ENCODE measurements at regions of chr10 and their contacts with region 1.

Region 1: DNA sequence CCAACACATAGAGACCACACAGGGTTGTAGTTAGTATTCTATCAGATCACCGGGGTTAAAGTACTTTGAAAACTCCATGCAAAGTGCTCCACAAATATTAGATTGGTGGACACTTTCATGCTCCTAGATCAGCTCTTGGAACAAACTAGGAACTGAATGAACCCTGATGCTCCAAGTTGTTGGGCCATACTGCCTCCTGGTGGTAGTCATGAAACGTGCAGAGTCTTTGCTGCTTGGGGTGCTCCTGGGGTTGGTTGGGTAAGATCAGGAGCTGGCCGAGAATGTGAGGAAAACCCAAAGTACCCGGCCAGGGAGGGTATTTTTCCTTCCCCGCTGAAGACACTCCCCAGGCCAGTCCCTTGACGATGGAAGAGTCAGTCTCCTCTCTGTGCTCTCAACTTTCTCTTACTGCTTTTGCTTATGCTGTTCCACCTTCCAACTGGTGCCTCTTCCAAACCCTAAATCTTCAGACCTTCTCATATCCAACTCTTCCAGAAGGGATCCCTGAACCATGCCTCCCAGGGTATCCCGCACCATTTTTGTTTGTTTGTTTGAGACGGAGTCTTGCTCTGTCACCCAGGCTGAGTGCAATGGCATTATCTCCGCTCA is 920 bp upstream of the RPEL1 start:
- DNase-seq: peak; percentile 75
- ATAC-seq: peak; percentile 88
- H3K4me3 Mint-ChIP-seq: no peak overlapping the region
- H3K27ac Mint-ChIP-seq: no peak overlapping the region
- H3K4me1 Mint-ChIP-seq: peaks cover 8% of the 10 kb centered on the region
- H3K27me3 Mint-ChIP-seq: no peaks in the 10 kb centered on the region
- CTCF ChIP-seq: peak; percentile 84

Region 2: GRCh38 chr10:102841827-102842345 is 402.9 kb before region 1 on chr10:
- CTCF ChIA-PET with region 1: interaction called, 7 read pairs
- POLR2A ChIA-PET with region 1: no interaction called
- intact Hi-C with region 1: loop called (anchors 10 kb)
- DNase-seq: no peak
- ATAC-seq: no peak
- H3K4me3 Mint-ChIP-seq: no peak overlapping the region
- H3K27ac Mint-ChIP-seq: no peak overlapping the region
- H3K4me1 Mint-ChIP-seq: no peaks in the 10 kb centered on the region
- H3K27me3 Mint-ChIP-seq: no peaks in the 10 kb centered on the region
- CTCF ChIP-seq: no peak

Region 3: DNA sequence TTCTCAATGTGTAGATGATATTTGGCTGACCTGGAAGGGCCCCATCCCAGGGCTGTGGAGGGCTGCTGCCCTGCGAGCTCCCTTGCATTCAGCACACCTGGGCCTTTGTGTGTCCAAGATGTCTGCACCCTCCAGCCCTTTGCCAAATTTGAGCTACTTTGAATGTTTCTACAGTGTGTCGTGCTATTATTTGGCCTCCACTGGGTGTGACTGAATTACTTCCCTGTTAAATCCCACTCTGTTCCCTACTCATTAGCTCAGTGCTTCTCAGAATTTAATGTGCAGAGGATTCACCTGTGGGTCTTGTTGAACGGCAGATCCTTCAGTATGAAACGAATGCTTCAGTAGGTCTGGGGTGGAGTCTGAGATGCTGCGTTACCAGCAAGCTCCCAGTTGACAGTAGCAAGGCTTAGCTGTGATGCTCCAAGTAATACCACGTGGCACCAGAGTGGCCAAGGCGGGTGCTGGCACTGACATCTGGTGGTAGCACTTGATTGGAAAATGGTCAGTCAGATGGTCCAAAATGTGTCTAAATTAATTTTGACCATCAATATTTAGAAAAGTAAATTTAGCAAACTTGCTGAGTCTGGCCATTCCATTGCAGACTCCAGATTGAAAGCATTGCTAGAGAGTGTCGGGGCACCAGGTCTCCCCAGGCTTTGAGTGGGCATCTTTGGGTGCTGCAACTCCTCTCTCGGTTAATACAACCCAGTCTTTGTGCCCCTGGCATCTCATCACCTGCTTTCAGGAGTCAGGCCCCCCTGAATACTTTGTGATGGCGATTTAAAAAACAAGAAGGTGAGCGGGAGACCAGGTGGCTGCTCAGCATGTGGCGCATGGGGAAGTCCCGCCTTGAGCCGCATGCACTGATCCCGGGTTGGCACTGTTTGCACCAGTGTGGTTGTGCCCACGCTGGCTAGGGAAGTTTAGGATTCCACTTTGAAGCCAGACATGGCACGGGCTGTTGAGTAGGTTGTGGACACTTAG is 181.9 kb before region 1 on chr10:
- CTCF ChIA-PET with region 1: interaction called, 10 read pairs
- POLR2A ChIA-PET with region 1: no interaction called
- intact Hi-C with region 1: no loop called
- DNase-seq: no peak
- ATAC-seq: no peak
- H3K4me3 Mint-ChIP-seq: no peak overlapping the region
- H3K27ac Mint-ChIP-seq: no peak overlapping the region
- H3K4me1 Mint-ChIP-seq: no peaks in the 10 kb centered on the region
- H3K27me3 Mint-ChIP-seq: no peaks in the 10 kb centered on the region
- CTCF ChIP-seq: no peak

Region 4: DNA sequence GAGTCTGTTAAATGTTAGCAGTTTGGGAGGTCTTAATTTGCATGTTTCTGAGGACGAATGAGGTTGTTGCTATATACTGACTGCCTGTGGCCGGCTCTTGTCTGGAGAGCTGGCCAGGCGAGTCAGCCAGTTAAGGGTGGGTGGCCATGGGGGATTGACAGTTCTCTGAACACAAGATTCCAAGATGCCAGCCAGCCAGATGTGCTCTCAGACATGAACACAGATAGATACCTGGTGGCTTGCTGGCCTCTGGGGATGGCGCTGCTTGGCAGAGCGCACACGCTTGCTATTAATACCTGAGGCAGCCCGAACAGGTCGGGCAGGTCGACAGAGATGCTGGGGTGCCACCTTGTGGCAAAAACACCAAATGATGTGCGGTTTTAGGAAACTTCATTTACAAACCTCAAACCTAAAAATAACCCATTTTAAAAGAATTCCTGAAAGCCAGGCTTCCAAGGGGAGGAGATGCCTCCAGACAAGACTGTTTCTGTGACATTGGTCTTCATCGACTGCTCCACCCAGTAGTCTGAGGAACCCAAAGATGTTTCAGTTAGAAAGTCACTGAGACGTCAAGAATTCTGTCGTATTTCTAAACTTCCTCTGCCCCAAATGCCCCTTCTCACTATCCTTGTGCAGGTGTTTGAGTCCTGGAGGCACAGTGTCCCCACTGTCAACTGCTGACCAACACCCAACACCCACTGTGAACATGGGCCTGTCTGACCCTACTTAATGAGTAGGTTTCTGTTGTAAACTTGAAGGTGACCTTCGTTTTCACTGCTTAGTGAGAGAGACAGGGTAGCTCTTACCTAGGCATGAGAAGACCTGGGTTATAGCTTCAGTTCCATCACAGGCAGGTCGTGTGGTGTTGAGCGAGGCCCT is 175.1 kb before region 1 on chr10:
- CTCF ChIA-PET with region 1: interaction called, 10 read pairs
- POLR2A ChIA-PET with region 1: no interaction called
- intact Hi-C with region 1: loop called (anchors 10 kb)
- DNase-seq: peak; percentile 84
- ATAC-seq: peak; percentile 76
- H3K4me3 Mint-ChIP-seq: no peak overlapping the region
- H3K27ac Mint-ChIP-seq: peak overlapping the region; percentile 29
- H3K4me1 Mint-ChIP-seq: peaks cover 23% of the 10 kb centered on the region
- H3K27me3 Mint-ChIP-seq: no peaks in the 10 kb centered on the region
- CTCF ChIP-seq: peak; percentile 74

Region 5: DNA sequence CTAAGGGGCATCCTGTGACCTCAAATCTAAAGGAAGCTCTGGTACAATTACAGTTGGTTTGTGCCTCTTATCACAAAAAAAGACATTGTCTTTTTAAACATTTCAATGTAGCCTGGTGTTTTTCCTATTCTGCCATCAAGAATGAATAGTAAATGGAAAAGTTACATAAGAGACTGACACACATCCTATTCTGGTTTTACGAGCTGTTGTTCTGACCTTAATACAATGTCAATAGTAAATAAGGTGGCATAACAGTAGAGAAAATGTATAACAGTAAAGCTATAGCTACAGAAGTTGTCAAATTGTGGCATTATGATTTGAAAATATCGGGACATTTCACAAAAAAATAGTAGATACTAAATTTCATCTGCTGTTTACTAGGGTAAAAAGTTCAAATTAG is 140.0 kb before region 1 on chr10:
- CTCF ChIA-PET with region 1: interaction called, 17 read pairs
- POLR2A ChIA-PET with region 1: no interaction called
- intact Hi-C with region 1: no loop called
- DNase-seq: no peak
- ATAC-seq: no peak
- H3K4me3 Mint-ChIP-seq: no peak overlapping the region
- H3K27ac Mint-ChIP-seq: no peak overlapping the region
- H3K4me1 Mint-ChIP-seq: no peaks in the 10 kb centered on the region
- H3K27me3 Mint-ChIP-seq: no peaks in the 10 kb centered on the region
- CTCF ChIP-seq: no peak

Region 6: DNA sequence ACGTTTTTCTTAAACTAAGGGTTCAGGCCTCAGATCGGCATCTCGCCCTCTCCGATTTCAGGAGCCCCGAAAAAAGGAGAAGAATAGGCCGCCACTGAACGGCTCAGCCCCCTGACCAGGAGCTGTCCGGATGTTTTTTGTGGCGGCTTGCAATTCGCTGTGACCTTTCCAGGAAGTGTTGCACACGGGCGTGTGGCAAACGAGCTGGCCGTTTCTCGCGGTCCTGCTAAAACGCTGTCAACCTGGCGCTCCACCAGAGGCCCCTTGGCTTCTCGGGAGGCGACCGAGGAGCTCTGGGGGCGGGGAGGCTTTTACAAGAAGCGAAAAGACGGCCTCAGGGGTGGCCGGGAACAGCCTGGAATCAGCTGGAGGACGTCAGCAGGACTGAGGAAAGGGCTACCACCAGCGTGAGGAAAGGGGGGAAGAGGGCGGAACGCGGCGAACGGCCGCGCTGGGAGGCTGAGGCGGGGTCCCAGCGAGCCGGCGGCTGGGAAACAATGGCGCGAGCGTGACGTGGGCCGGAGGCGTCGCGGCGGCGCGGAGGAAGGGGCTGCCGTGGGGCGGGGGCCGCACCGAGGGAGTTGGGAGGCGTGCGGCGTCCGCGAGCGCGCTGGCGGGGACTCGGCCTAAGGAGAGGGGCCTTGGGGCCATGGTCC is 52.2 kb before region 1 on chr10:
- CTCF ChIA-PET with region 1: interaction called, 11 read pairs
- POLR2A ChIA-PET with region 1: interaction called, 4 read pairs
- intact Hi-C with region 1: no loop called
- DNase-seq: peak; percentile 84
- ATAC-seq: peak; percentile 52
- H3K4me3 Mint-ChIP-seq: peak overlapping the region; percentile 97
- H3K27ac Mint-ChIP-seq: peak overlapping the region; percentile 99
- H3K4me1 Mint-ChIP-seq: peaks cover 36% of the 10 kb centered on the region
- H3K27me3 Mint-ChIP-seq: peaks cover 1% of the 10 kb centered on the region
- CTCF ChIP-seq: no peak

Region 7: DNA sequence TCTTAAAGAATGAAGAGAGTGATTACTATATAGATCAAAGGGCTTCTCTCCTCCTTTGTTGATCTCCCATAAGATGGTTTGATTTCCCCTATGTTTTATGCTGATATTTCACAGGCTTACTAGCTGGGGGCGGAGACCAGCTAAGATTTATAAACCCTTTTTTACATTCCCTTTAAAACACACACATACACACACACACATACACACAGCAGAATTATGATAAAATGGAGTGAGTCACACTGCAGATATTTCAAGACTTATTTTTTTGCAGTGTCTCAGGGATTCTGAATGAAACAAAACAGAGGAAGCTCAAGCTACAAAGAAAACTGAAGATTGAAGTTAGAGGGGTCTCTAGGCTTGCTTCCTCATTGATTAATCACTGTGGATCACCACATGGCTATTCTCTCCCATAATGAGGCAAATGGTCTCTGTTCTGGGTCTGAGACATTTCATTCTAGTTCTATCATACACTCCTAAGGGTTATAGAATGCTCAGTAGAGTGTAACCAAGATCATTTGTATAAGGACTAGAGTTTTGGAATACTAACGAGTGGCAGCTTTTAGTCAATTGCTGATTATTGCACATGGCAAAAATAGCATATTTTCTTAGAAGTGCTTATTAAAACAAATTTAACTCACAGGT is 50.7 kb after region 1 on chr10:
- CTCF ChIA-PET with region 1: interaction called, 10 read pairs
- POLR2A ChIA-PET with region 1: no interaction called
- intact Hi-C with region 1: no loop called
- DNase-seq: no peak
- ATAC-seq: no peak
- H3K4me3 Mint-ChIP-seq: no peak overlapping the region
- H3K27ac Mint-ChIP-seq: no peak overlapping the region
- H3K4me1 Mint-ChIP-seq: no peaks in the 10 kb centered on the region
- H3K27me3 Mint-ChIP-seq: peaks cover 4% of the 10 kb centered on the region
- CTCF ChIP-seq: no peak

Region 8: DNA sequence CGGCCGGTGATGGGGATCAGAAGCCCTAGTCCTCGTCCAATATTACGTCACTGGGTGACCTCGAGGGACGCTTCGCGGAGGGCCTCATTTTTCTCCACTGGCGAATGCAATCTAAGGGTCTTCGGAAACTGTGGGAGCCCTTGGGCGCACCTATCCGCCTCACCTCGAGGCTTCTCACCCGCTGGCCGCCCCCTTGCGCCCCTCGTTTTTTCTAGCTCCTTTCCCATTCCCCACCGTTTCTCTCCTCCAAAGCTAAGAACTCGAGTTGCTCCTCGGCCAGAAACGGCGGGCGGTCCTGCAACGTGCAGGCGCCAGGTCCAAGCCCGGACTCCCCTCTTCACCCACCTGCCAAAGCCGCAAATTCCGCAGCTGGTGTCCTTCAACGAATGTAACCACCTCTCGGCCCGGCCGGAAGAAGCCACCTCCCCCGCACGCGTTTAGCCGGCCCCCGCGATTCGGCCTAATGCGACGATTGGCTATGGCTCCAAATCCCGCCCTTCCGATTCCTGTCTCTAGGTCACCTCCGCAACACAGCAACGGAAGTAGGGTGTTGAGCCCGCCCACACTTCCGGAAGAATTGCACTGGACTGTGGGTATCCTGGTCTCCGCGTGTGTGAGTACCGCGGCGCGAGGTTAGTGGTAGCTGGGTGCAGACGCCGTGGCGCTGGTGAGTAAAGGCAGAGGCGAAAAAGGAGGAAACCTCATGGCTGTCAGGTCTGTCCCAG is 151.5 kb after region 1 on chr10 and contains the starts of genes ATP5MK and PDCD11:
- CTCF ChIA-PET with region 1: no interaction called
- POLR2A ChIA-PET with region 1: no interaction called
- intact Hi-C with region 1: no loop called
- DNase-seq: peak; percentile 99
- ATAC-seq: peak; percentile 100
- H3K4me3 Mint-ChIP-seq: peak within 1 kb of the TSS; percentile 88
- H3K27ac Mint-ChIP-seq: peak within 1 kb of the TSS; percentile 97
- H3K4me1 Mint-ChIP-seq: peaks cover 59% of the 10 kb centered on the region
- H3K27me3 Mint-ChIP-seq: no peaks in the 10 kb centered on the region
- CTCF ChIP-seq: no peak
- total RNA-seq, gene ATP5MK: 404 to 425 TPM
- total RNA-seq, gene PDCD11: 63.7 to 68.8 TPM